Right cardiac atrium (tissue), 5 donors: ENCODE measurements at regions of chr16 and their contacts with region 1.

Region 1: DNA sequence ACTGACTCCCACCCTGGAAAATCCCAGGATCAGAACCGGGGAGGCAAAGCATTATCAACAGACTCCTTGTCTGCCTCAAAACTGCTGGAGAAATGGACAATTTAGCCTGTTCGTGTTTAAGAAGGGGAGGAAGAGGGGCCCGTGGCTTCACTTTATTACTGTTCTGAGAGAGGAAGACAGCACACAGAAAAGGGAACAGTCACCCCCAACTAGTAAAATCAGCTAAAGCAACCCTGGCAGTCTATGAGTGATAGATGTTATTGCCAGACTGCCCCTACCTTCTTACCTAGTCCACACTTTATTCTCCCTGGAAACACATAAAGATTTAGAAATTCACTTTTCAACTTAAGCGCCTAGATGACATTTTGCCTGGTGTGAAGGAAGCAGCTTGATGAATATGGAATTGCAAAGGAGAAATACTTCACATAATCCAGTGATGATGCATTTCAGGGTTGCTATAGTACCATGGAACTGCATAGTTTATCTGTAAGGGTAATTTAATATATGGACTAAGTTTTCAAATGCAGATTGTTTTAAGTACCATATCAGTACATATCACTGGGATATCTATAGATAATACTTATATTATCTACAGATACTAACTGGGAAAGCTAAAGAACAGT is 36.9 kb upstream of the TRAP1 start:
- DNase-seq: no peak
- ATAC-seq: no peak
- H3K4me3 ChIP-seq: no peak overlapping the region
- H3K27ac ChIP-seq: no peak overlapping the region
- H3K4me1 ChIP-seq: no peaks in the 10 kb centered on the region
- H3K27me3 ChIP-seq: no peaks in the 10 kb centered on the region

Region 2: DNA sequence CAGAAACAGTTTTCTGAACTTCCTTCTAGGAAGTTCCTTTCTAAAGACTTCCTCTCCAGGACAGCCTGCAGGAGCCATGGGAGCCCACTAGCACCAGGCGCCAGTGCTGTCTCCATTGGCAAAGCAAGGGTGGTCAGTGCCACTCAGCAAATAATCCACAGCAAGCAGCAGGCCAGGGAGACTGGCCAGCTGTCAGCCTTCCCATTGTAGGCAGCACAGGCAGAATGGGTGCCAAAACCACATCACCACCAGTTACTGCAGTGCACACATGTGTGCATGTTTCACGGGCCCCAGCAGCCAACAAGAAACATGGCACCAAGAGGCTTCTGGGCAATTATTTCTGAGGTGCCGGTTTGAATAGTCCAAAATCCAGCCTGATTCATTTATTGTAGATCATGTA is 73.0 kb before region 1 on chr16:
- intact Hi-C with region 1: loop called in 1 of 4 experiments (anchors 10 kb)
- DNase-seq: peak in 1 of 3 donors; percentile 64
- ATAC-seq: peak; percentile 52 to 67
- H3K4me3 ChIP-seq: no peak overlapping the region
- H3K27ac ChIP-seq: no peak overlapping the region
- H3K4me1 ChIP-seq: no peaks in the 10 kb centered on the region
- H3K27me3 ChIP-seq: no peaks in the 10 kb centered on the region